ENCODE measurements at regions of chr1 and their contacts with region 1.

Region 1: GRCh38 chr1:119647734-119648619 is at the start of gene ZNF697:
- DNase-seq: peak; percentile 98 to 99
- ATAC-seq: peak; percentile 94 to 96 (median 96)
- H3K4me3 ChIP-seq: peak within 1 kb of the TSS; percentile 96
- H3K27ac ChIP-seq: peak within 1 kb of the TSS; percentile 93
- H3K4me1 ChIP-seq: peaks cover 6% of the 10 kb centered on the region
- H3K27me3 ChIP-seq: no peaks in the 10 kb centered on the region
- CTCF ChIP-seq: peak; percentile 8
- total RNA-seq, gene ZNF697: 2.9 to 4.9 (median 3.9) TPM

Region 2: DNA sequence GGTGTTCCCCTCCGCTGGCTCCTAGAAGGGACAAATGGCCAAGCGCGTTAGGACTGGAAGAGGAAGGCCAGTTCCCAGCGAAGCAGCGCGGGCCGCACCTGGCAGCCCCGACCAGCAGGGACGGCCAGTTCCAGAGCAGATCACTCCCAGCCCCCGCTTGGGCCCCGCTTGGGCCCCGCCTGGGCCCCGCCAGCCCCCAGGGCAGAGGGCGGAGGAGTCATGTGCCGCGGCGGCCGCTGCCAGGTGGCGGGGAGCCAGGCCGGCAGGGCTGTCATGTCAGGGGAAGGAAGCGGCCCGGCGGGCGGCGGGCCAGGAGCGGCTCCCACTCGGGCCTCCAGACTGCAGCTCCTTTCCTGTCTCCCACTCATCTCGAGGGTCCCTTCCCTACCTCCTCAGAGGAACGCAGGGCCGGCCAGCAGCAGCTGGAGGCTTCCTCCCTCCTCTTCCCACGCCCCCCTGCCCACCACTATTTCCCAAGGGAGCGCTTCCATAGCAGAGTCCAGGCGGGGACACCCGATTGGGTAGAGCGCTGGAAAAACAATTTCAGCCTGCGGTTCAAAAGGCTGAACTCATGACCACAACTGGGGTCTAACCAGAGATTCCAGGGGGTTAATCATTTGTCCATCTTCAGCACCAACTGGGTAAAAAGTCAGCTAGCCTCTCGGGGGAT is 16.4 kb before region 1 on chr1:
- intact Hi-C with region 1: loop called in 1 of 2 experiments (anchors 2 kb)
- DNase-seq: peak; percentile 91 to 95
- ATAC-seq: peak; percentile 90 to 97 (median 94)
- H3K4me3 ChIP-seq: peak overlapping the region; percentile 61
- H3K27ac ChIP-seq: peak overlapping the region; percentile 79
- H3K4me1 ChIP-seq: peaks cover 48% of the 10 kb centered on the region
- H3K27me3 ChIP-seq: no peaks in the 10 kb centered on the region
- CTCF ChIP-seq: no peak

Region 3: GRCh38 chr1:119675349-119676345 is 27.7 kb after region 1 on chr1:
- intact Hi-C with region 1: loop called in 1 of 2 experiments (anchors 2 kb)
- DNase-seq: peak; percentile 55 to 63
- ATAC-seq: peak; percentile 83 to 91 (median 85)
- H3K4me3 ChIP-seq: peak overlapping the region; percentile 52
- H3K27ac ChIP-seq: no peak overlapping the region
- H3K4me1 ChIP-seq: no peaks in the 10 kb centered on the region
- H3K27me3 ChIP-seq: no peaks in the 10 kb centered on the region
- CTCF ChIP-seq: peak; percentile 91

Region 4: GRCh38 chr1:119838236-119838635 is 190.3 kb after region 1 on chr1:
- intact Hi-C with region 1: no loop called
- DNase-seq: no peak
- ATAC-seq: no peak
- H3K4me3 ChIP-seq: no peak overlapping the region
- H3K27ac ChIP-seq: no peak overlapping the region
- H3K4me1 ChIP-seq: no peaks in the 10 kb centered on the region
- H3K27me3 ChIP-seq: no peaks in the 10 kb centered on the region
- CTCF ChIP-seq: no peak

Measured in psoas muscle (tissue), 8 donors.